Activated CD4-positive, alpha-beta T cell treated with anti-CD3 and anti-CD28 coated beads for 36 hours (primary cell): ENCODE measurements at regions of chr14 and their contacts with region 1.

Region 1: DNA sequence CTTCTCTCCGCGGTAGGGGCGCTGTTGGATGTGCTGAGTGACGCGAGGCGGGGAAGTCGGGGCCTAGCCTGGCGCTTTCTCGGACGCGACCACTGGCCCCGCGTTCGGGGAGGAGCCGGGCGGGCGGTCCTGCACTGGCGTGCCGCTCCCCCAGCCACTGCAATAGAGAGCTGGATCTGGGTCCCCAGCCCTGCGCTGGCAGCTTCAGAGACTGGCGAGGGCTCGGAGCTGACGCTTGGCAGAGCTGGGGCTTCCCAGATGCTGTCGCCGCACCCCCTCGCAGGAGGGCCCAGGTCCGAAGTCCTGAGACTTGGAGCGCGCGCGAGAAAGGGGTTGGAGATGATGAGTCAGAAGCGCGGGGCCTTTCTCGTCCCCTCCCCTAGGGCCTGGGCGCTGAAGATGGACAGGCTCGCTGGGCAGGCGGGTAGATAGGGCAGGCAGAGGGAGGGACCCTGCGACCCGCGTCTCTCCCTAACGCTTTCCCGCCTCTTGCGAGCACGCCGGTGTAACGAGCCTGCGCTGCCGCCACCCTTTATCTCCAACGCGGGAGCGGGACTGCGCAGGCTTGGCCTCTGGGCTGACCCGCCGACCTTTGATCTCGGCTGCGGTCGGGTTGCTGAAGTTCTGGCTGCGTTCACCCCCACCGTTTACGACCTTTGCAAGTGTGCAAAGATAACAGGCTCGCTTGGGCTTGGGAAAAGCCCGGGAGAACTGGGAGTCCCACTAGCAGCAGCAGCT is 3.0 kb downstream of the TMEM253 start:
- DNase-seq: peak; percentile 97
- ATAC-seq: peak; percentile 88
- H3K4me3 Mint-ChIP-seq: peak overlapping the region; percentile 83
- H3K27ac Mint-ChIP-seq: peak overlapping the region; percentile 98
- H3K4me1 Mint-ChIP-seq: peaks cover 38% of the 10 kb centered on the region
- H3K27me3 Mint-ChIP-seq: no peaks in the 10 kb centered on the region

Region 2: DNA sequence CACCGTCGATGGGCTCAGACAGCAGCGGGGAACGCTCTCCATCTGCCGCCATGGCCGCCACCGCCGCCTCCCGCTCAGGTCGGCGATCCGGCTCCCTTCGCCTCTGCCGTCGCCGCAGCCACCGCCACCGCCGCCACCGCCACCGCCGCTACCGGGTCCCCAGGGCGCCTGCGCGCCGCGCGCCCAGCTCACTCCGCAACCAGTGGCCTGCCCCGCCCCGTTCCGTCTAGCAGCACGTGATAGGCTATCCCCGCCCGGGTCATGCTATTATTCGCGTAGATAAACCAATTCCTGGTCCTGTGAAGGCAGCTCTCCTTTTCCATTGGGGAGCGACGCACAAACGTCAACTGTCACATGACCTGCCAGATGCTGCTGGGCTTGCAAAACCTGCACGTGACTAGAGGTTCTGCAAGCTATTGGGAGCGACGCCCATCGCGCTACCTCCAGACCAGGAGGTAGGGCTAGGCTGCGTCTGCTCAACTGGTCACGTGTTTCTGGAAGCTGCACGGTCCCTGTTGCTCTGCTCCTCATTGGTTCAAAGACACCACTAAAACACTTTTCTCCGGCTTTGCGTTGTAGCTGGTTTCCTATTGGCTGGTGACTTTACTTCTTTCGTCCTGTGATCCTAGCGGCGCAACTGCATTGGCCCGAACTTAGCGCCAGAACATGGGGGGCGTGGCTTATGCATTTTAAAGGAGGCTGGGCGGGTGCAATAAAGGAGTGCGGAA is 642.4 kb before region 1 on chr14 and contains the start of gene PIP4P1:
- CTCF ChIA-PET with region 1: no interaction called
- POLR2A ChIA-PET with region 1: no interaction called
- intact Hi-C with region 1: loop called (anchors 5 kb)
- DNase-seq: peak; percentile 99
- ATAC-seq: peak; percentile 95
- H3K4me3 Mint-ChIP-seq: peak within 1 kb of the TSS; percentile 84
- H3K27ac Mint-ChIP-seq: peak within 1 kb of the TSS; percentile 96
- H3K4me1 Mint-ChIP-seq: peaks cover 26% of the 10 kb centered on the region
- H3K27me3 Mint-ChIP-seq: no peaks in the 10 kb centered on the region
- total RNA-seq, gene PIP4P1: 24.2 to 24.7 TPM

Region 3: GRCh38 chr14:20989572-20990551 is 114.0 kb before region 1 on chr14 and contains the start of gene METTL17:
- CTCF ChIA-PET with region 1: interaction called, 3 read pairs
- POLR2A ChIA-PET with region 1: interaction called, 3 read pairs
- intact Hi-C with region 1: loop called in 1 of 2 experiments (anchors 1 kb)
- DNase-seq: peak; percentile 93
- ATAC-seq: peak; percentile 97
- H3K4me3 Mint-ChIP-seq: peak within 1 kb of the TSS; percentile 92
- H3K27ac Mint-ChIP-seq: peak within 1 kb of the TSS; percentile 89
- H3K4me1 Mint-ChIP-seq: peaks cover 37% of the 10 kb centered on the region
- H3K27me3 Mint-ChIP-seq: no peaks in the 10 kb centered on the region
- total RNA-seq, gene METTL17: 89.3 to 90.0 TPM

Region 4: DNA sequence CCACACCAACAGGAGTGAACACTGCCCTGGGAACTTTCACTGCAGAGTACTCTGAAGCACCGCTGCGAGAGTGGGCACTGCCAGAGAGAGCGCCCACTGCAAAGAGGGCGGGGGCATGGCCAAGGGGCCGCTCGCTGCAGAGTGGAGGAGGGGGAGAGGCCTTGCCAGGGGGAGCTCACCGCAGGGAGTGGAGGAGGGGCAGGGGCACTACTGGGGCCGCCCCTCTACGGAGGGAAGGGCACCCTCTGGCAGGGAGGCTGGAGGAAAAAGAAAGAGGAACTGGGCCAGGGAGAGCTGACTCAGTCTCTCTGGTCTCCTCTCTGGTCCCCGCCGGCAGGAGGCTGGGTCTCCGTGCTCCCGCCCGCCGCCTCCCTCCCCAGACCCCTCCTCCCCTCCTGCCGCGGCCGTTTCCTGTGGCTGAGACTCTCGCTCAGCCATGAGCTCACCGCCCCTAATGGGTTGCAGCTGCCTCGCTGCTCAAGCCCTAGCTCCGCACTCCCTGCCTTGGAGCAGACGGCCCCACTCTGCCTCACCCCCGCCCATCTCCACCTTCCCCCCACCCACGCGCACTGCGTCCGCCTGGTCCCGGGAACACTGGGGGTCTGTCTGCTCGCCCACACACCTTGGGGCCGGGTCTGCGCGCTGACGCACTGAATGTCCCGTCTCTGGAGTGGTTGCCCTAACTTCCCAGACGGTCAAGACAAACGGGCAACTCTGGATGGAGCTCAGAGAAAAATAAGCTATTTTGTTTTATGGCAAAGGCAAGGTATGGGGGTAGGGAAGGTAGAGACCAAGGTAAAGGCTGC is 32.5 kb before region 1 on chr14:
- CTCF ChIA-PET with region 1: interaction called, 52 read pairs
- POLR2A ChIA-PET with region 1: interaction called, 4 read pairs
- intact Hi-C with region 1: loop called (anchors 1 to 2 kb)
- DNase-seq: peak; percentile 83
- ATAC-seq: peak; percentile 72
- H3K4me3 Mint-ChIP-seq: peak overlapping the region; percentile 63
- H3K27ac Mint-ChIP-seq: no peak overlapping the region
- H3K4me1 Mint-ChIP-seq: peaks cover 33% of the 10 kb centered on the region
- H3K27me3 Mint-ChIP-seq: peaks cover 54% of the 10 kb centered on the region

Region 5: DNA sequence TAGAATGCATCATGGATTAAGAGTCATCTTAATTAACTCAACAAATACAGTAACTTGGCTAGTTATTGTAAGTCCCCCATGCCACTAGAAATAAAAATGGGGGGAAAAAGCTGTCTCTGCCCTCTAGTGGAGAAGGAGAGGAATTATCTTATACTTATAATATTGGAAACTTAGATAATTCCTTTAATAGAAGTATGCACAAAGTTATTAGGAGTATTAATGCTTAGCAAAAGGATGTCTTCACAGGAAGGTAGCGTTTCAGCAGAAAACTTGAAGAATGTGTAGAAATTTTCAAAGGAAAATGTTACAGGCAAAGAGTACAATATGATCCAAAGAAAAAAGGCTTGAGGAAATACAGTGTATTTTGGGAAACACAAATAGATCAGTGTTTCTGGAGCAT is 32.1 kb after region 1 on chr14:
- CTCF ChIA-PET with region 1: interaction called, 11 read pairs
- POLR2A ChIA-PET with region 1: no interaction called
- intact Hi-C with region 1: no loop called
- DNase-seq: no peak
- ATAC-seq: no peak
- H3K4me3 Mint-ChIP-seq: no peak overlapping the region
- H3K27ac Mint-ChIP-seq: no peak overlapping the region
- H3K4me1 Mint-ChIP-seq: no peaks in the 10 kb centered on the region
- H3K27me3 Mint-ChIP-seq: peaks cover 3% of the 10 kb centered on the region

Region 6: GRCh38 chr14:21455911-21456667 is 352.2 kb after region 1 on chr14 and contains the start of gene CHD8:
- CTCF ChIA-PET with region 1: no interaction called
- POLR2A ChIA-PET with region 1: interaction called, 5 read pairs
- intact Hi-C with region 1: loop called in 1 of 2 experiments (anchors 5 kb)
- DNase-seq: peak; percentile 100
- ATAC-seq: peak; percentile 99
- H3K4me3 Mint-ChIP-seq: peak within 1 kb of the TSS; percentile 97
- H3K27ac Mint-ChIP-seq: peak within 1 kb of the TSS; percentile 99
- H3K4me1 Mint-ChIP-seq: peaks cover 30% of the 10 kb centered on the region
- H3K27me3 Mint-ChIP-seq: no peaks in the 10 kb centered on the region
- total RNA-seq, gene CHD8: 84.3 to 104 TPM